ENCODE measurements at regions of chr4 and their contacts with region 1.

Region 1: DNA sequence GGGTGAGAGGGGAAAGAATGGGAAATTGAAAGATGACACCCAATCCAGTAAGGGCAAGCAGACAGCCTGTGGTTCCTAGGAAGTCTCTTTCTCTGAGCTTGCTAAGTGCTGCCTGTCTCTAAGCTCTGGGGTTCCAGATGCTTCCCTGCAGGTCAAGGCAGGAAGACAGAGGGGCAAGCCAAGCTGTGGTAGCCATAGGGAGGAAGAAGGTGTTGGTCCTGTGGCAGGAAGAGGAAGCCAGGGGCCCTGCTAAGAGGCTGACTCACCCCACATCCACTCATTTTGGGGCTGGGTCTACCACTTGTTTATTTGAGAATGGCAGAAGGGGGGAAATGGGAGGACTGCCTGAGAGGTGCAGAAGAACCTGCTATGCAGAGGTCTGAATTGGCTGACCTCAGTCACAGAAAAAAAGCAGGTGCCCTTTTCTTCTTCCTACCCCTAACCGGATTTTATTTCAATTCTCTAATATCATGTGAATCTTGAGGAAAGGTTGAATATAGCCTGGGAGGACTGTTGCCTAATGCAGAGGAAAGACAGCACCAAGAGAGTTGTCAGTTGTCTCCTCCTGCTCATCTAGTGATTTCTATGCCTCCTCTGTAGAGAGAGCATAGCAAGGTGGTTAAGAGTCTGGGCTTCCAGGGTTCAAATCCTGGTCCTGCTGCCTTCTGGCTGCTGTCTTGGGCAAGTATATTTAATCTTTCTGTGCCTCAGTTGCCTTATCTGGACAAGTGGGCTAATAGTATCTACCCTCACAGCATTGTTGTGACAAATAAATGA is 27.4 kb downstream of the HOPX start:
- DNase-seq: peak; percentile 12
- H3K4me3 ChIP-seq: no peak overlapping the region
- H3K27ac ChIP-seq: no peak overlapping the region
- H3K4me1 ChIP-seq: peaks cover 9% of the 10 kb centered on the region
- CTCF ChIP-seq: no peak

Region 2: GRCh38 chr4:56626963-56627362 is 26.7 kb before region 1 on chr4:
- CTCF ChIA-PET with region 1: no interaction called
- POLR2A ChIA-PET with region 1: no interaction called
- intact Hi-C with region 1: no loop called
- DNase-seq: no peak
- H3K4me3 ChIP-seq: no peak overlapping the region
- H3K27ac ChIP-seq: no peak overlapping the region
- H3K4me1 ChIP-seq: no peaks in the 10 kb centered on the region
- CTCF ChIP-seq: 0 out of 2 replicates have a peak, but pooled peaks have one; percentile 18

Region 3: GRCh38 chr4:56641494-56642051 is 12.1 kb before region 1 on chr4:
- CTCF ChIA-PET with region 1: no interaction called
- POLR2A ChIA-PET with region 1: interaction called, 24 read pairs
- intact Hi-C with region 1: no loop called
- DNase-seq: no peak
- H3K4me3 ChIP-seq: no peak overlapping the region
- H3K27ac ChIP-seq: no peak overlapping the region
- H3K4me1 ChIP-seq: no peaks in the 10 kb centered on the region
- CTCF ChIP-seq: no peak

Measured in OCI-LY7 (cell line).